ENCODE measurements at regions of chr4 and their contacts with region 1.

Region 1: DNA sequence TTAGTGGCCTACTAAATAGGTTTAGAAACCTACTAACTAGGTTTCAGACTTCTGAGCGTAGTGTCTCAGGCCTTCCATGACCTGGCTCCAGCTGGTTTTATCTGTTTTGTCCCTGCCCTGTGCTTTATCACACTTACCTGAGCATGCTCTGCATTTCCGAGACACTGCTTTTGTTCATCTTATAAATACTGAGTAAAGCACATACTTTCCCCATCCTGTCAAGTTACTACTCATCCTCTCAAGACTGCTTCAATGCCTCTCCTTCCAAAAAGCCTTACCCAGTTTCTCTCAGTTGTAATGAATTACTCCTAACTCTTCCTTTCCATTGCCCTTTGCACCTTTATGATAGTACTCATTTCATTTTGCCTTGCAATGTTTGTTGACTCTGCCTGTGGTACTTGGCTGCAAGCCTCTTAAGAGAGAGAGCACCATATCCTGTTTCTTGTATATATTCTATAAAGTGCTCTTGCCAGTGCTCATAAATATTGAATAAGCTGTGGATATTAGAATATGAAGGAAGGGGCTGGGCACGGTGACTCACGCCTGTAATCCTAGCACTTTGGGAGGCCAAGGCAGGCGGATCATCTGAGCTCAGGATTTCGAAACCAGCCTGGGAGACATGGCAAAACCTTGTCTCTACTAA is 34.4 kb downstream of the SLAIN2 start:
- DNase-seq: peak; percentile 93
- H3K4me3 Mint-ChIP-seq: peak overlapping the region; percentile 1
- H3K27ac Mint-ChIP-seq: peak overlapping the region; percentile 49
- H3K4me1 Mint-ChIP-seq: peaks cover 36% of the 10 kb centered on the region
- H3K27me3 Mint-ChIP-seq: no peaks in the 10 kb centered on the region
- CTCF ChIP-seq: no peak

Region 2: DNA sequence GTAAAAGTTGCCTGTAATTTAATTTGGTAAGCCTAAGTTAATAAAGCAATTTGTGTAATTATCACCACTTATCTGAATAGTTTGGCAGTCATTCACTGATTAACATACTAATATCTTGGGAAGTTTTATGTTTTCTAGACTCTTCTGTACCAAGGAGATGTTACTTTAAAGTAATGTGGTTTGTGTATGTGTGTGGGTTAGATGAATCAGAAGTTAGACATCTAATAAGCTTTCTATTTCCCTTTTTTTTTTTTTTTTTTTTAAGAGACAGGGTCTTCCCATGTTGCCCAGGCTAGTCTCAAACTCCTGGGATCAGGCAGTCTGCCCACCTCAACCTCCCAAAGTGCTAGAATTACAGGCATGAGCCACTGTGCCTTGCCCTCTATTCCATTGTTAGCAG is 29.2 kb before region 1 on chr4:
- CTCF ChIA-PET with region 1: interaction called, 3 read pairs
- POLR2A ChIA-PET with region 1: interaction called, 32 read pairs
- intact Hi-C with region 1: loop called (anchors 2 kb)
- DNase-seq: no peak
- H3K4me3 Mint-ChIP-seq: peak overlapping the region; percentile 45
- H3K27ac Mint-ChIP-seq: peak overlapping the region; percentile 79
- H3K4me1 Mint-ChIP-seq: peaks cover 37% of the 10 kb centered on the region
- H3K27me3 Mint-ChIP-seq: no peaks in the 10 kb centered on the region
- CTCF ChIP-seq: no peak